ENCODE measurements at regions of chr5 and their contacts with region 1.

Region 1: DNA sequence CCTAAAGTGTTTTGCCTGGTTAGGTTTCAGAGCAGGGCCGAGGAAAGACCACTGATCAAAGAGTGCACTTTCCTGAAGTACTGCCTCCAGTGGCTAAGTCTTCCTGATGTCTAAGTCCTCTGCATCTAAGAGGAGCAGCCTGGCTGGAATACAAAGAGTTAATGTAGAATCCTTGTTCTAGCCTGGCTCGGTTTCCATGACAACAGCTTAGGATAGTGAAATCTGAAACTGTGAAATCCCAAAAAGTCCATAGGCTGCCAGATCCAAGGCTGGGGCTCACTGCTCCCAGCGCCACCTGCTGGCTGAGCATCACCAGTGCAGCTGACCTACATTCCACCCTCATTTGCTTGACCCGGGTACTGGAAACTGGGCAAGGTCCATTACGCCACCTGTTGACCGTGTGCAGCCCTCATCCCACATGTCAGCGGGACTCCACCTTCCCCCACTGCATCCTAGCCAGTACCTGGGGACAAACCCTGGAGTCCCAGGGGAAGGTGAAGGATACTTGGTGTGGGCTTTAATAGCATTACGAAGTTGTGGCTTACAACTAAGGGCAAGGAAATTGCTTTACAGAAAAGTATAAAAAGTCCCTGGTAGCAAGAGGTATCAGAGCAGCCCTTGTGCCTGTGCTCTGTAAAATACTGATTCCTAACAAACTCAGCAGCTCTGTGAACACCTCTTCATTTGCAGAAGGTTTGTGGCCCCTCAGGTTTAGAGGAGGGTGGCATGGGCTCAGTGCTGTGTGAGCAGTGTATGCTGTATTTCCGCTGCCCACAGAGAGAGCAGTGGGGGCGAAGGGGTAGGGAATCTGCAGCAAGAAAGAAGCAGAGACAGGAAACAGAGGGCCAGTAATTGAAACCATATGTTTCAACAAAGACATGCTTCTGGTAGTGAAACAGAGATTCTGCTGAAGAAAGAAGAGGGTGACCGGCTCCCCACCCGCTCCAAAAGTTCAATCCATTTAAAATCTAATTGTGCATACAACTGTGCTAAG is 36.0 kb downstream of the PCDHGC5 start:
- DNase-seq: peak; percentile 74
- H3K4me3 ChIP-seq: no peak overlapping the region
- H3K27ac ChIP-seq: peak overlapping the region; percentile 51 to 56
- H3K4me1 ChIP-seq: peaks cover 6% of the 10 kb centered on the region
- H3K27me3 ChIP-seq: no peaks in the 10 kb centered on the region
- CTCF ChIP-seq: peak; percentile 97 to 99 (median 99)
- POLR2A ChIP-seq: no peak

Region 2: DNA sequence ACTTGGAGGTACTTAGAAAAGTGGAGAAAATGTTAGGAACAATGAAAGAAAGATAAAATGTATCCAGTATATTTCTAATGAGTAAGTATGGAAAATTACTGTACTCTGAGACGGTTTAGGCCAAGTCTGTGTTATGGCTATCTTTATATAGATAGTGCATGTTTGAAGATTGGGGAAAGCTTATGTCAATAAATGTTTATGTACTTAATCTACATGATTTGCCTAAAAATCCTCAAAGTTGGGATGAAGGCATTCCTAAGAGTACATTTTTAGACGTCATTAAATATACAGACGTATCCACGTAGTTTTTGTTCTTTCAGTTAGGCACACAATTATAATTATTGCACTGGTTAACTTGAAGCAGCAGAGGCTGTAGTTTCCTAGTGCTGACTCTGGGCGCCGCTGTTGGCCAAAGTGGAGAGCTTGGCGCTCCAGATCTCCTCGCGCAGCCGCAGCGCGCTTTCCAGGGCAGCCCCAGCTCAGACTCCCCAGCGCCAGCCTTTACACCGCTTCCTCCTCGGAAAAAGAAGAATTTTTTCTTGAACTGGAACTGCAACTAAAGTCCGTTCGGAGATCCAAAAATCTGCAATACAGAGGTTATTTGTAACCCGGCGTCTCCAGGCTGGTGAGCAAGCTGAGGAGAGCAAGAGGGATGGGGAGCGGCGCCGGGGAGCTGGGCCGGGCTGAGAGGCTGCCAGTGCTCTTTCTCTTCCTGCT is 137.5 kb before region 1 on chr5 and contains the start of gene PCDHGB4:
- intact Hi-C with region 1: no loop called
- DNase-seq: no peak
- H3K4me3 ChIP-seq: no peak within 1 kb of the TSS
- H3K27ac ChIP-seq: no peak within 1 kb of the TSS
- H3K4me1 ChIP-seq: no peaks in the 10 kb centered on the region
- H3K27me3 ChIP-seq: peaks cover 4% of the 10 kb centered on the region
- CTCF ChIP-seq: peak in 3 of 4 experiments; percentile 12 to 53 (median 46)
- POLR2A ChIP-seq: no peak
- total RNA-seq, gene PCDHGB4: 6.7 to 9.9 TPM

Region 3: DNA sequence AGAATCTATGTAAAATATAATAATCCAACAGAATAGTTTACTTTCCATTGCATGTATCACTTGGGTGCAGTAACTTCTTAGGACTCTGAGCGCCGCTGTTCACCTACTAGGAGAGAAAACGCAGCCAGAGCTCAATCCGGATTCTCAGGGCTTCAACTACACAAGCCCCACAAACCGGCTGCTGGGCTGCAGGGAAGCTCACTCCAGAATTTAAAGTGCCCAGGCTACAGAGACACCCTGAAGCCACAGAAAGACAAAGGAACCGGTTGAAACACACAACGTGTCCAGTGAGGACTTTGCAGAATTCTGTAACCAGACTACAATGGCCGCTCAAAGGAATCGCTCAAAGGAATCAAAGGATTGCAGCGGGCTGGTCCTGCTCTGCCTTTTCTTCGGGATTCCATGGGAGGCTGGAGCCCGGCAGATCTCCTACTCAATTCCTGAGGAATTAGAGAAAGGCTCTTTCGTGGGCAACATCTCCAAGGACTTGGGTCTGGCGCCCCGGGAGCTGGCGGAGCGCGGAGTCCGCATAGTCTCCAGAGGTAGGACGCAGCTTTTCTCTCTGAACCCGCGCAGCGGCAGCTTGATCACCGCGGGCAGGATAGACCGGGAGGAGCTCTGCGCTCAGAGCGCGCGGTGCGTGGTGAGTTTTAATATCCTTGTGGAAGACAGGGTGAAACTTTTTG is 111.9 kb before region 1 on chr5 and contains the start of gene PCDHGA10:
- intact Hi-C with region 1: loop called (anchors 10 kb)
- DNase-seq: peak; percentile 55
- H3K4me3 ChIP-seq: peak within 1 kb of the TSS; percentile 5 to 27
- H3K27ac ChIP-seq: peak within 1 kb of the TSS in 1 of 2 donors; percentile 39
- H3K4me1 ChIP-seq: no peaks in the 10 kb centered on the region
- H3K27me3 ChIP-seq: peaks cover 2% of the 10 kb centered on the region
- CTCF ChIP-seq: peak in 3 of 4 experiments; percentile 24 to 46 (median 38)
- POLR2A ChIP-seq: no peak
- total RNA-seq, gene PCDHGA10: 6.7 to 11.1 TPM

Region 4: DNA sequence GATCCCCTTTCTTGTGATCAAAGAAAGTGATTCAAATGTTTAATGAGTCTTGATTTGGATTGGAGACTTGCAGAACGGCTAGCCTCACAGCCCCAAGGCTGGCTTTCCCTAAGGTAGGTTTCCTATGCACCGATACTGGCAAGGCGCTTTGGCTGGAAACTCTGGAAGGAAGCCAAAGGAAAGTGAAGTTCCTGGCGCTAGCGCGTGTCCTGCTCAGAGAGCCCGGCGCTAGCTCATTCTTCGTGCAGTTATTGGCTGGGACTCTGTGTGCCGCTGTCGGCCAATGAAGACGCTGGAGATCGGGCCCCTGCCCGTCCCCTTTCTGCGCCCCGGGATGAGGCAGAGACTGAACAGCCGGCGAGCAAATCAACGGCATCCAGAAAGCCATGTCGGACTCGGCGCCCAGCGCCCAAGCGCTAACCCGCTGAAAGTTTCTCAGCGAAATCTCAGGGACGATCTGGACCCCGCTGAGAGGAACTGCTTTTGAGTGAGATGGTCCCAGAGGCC is 49.2 kb before region 1 on chr5 and contains the start of gene PCDHGC3:
- intact Hi-C with region 1: loop called (anchors 1 kb)
- DNase-seq: peak; percentile 94
- H3K4me3 ChIP-seq: peak within 1 kb of the TSS; percentile 46 to 50
- H3K27ac ChIP-seq: peak within 1 kb of the TSS; percentile 88
- H3K4me1 ChIP-seq: peaks cover 2% of the 10 kb centered on the region
- H3K27me3 ChIP-seq: no peaks in the 10 kb centered on the region
- CTCF ChIP-seq: peak in 3 of 4 experiments; percentile 46 to 62 (median 59)
- POLR2A ChIP-seq: peak; percentile 56
- total RNA-seq, gene PCDHGC3: 27.6 to 55.3 TPM

Region 5: GRCh38 chr5:141557681-141558136 is 32.8 kb after region 1 on chr5:
- intact Hi-C with region 1: loop called (anchors 2 kb)
- DNase-seq: peak; percentile 47
- H3K4me3 ChIP-seq: no peak overlapping the region
- H3K27ac ChIP-seq: peak overlapping the region; percentile 44
- H3K4me1 ChIP-seq: peaks cover 5% of the 10 kb centered on the region
- H3K27me3 ChIP-seq: no peaks in the 10 kb centered on the region
- CTCF ChIP-seq: peak; percentile 72 to 83 (median 76)
- POLR2A ChIP-seq: no peak

Measured in prostate gland (tissue), 2 donors.